HCT116 (cell line): ENCODE measurements at regions of chr6 and their contacts with region 1.

Region 1: GRCh38 chr6:28816909-28817807 is 106.6 kb downstream of the TRIM27 start:
- DNase-seq: no peak
- ATAC-seq: peak; percentile 89
- H3K4me3 ChIP-seq: peak overlapping the region; percentile 34 to 46
- H3K27ac ChIP-seq: no peak overlapping the region
- H3K4me1 ChIP-seq: peaks cover 0 to 8% of the 10 kb centered on the region in 2 experiments; a peak in 1 of 4 replicates
- H3K27me3 ChIP-seq: no peaks in the 10 kb centered on the region
- CTCF ChIP-seq: no peak
- POLR2A ChIP-seq: no peak
- RAD21 ChIP-seq: no peak

Region 2: GRCh38 chr6:28953039-28953584 is 136.0 kb after region 1 on chr6:
- CTCF ChIA-PET with region 1: no interaction called
- POLR2A ChIA-PET with region 1: no interaction called
- RAD21 ChIA-PET with region 1: interaction called in 1 of 2 experiments, 10 read pairs
- intact Hi-C with region 1: no loop called
- DNase-seq: peak; percentile 36
- ATAC-seq: peak; percentile 46
- H3K4me3 ChIP-seq: no peak overlapping the region
- H3K27ac ChIP-seq: no peak overlapping the region
- H3K4me1 ChIP-seq: peaks cover 14 to 25% of the 10 kb centered on the region in 2 experiments; a peak in 3 of 4 replicates
- H3K27me3 ChIP-seq: no peaks in the 10 kb centered on the region
- CTCF ChIP-seq: no peak
- POLR2A ChIP-seq: no peak
- RAD21 ChIP-seq: no peak